Activated T-helper 1 cell treated with anti-CD3 and anti-CD28 coated beads, Interleukin-12 subunit alpha, Interleukin-12 subunit beta, Interleukin-2, Interleukin-4 antibody, amounts not matched to agents 30 ng/mL and 10 ng/mL and 1 ng/mL, durations not matched to agents 14 hours and 24 hours and 36 hours (primary cell): ENCODE measurements at regions of chr14 and their contacts with region 1.

Region 1: DNA sequence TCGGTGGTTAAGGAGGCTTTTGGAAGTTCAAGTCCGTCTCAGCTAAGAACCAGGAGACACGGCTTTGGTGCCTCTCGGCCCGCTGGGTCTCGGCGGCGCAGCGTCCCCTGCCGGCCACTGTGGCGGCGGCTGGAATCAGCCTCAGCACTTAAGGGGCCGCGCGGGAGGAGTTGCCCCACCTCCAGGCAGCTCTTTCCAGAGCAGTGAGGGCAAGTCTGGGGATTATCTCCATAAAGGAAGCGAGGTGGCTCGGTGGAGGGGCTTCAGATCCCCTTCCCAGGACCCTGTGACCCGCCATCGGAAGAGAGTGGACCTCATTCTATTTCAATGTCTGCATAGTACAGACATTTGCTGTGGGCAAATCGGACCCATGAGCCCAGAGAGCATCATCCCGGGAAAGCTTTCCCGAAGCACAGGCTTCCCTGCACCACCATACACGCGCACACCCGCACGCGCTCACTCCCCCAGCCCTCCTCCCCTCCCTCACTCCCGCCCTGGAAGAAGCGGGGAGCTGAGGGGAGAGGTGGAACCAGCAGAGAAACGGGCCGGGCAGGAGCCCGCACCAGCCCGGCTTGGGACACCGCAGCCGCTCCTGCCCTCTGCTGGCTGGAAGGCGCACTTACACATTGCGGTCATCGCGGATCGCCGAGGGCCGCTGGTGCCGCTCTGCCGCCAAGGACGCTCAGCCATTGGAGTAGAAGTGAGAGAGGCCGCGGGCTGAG is 15.9 kb downstream of the RNASE2 start:
- DNase-seq: peak; percentile 72
- H3K4me3 Mint-ChIP-seq: peak overlapping the region; percentile 93
- H3K27ac Mint-ChIP-seq: no peak overlapping the region
- H3K4me1 Mint-ChIP-seq: peaks cover 15% of the 10 kb centered on the region
- H3K27me3 Mint-ChIP-seq: peaks cover 35% of the 10 kb centered on the region

Region 2: GRCh38 chr14:20332788-20333493 is 638.2 kb before region 1 on chr14 and contains the start of gene CCNB1IP1:
- intact Hi-C with region 1: loop called (anchors 10 kb)
- DNase-seq: peak; percentile 62
- H3K4me3 Mint-ChIP-seq: peak within 1 kb of the TSS; percentile 98
- H3K27ac Mint-ChIP-seq: peak within 1 kb of the TSS; percentile 91
- H3K4me1 Mint-ChIP-seq: peaks cover 59% of the 10 kb centered on the region
- H3K27me3 Mint-ChIP-seq: peaks cover 5% of the 10 kb centered on the region
- total RNA-seq, gene CCNB1IP1: 61.2 and 72.5 TPM in 2 replicates

Region 3: DNA sequence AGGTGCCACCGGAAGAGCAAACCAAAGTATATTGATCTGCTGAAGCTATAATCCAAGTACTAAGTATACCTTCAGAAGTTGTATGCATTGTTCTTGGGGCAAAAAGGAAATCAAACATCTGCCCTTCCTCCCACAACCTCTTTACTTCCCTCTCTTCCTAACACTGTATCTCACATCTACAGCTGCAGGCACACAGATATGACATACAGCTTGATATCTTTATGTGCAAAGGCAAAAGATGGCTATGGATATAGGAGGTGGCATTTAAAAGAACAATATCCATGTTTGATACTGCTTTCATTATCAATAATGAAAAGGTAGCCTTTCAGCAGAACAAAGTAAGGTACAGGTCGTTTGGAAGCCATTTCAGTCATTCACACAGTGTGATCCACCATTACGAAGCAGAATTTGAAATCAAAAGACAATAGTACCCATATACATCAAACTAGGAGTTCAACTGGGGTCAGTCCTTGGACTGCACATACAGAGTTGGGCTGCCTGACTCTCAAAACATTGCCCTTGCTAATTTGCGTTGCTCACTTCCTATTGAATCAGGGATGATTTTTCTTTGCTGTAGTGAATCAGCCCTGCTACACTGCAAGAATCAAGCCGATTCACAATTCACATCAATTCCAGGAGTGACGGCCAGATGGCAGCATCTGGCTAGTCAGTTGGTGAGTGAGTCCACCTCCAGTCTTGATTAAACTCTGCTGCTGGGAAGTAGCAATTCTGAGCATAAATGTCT is 273.7 kb before region 1 on chr14:
- intact Hi-C with region 1: loop called (anchors 1 kb)
- DNase-seq: peak; percentile 44
- H3K4me3 Mint-ChIP-seq: no peak overlapping the region
- H3K27ac Mint-ChIP-seq: no peak overlapping the region
- H3K4me1 Mint-ChIP-seq: no peaks in the 10 kb centered on the region
- H3K27me3 Mint-ChIP-seq: peaks cover 8% of the 10 kb centered on the region

Region 4: DNA sequence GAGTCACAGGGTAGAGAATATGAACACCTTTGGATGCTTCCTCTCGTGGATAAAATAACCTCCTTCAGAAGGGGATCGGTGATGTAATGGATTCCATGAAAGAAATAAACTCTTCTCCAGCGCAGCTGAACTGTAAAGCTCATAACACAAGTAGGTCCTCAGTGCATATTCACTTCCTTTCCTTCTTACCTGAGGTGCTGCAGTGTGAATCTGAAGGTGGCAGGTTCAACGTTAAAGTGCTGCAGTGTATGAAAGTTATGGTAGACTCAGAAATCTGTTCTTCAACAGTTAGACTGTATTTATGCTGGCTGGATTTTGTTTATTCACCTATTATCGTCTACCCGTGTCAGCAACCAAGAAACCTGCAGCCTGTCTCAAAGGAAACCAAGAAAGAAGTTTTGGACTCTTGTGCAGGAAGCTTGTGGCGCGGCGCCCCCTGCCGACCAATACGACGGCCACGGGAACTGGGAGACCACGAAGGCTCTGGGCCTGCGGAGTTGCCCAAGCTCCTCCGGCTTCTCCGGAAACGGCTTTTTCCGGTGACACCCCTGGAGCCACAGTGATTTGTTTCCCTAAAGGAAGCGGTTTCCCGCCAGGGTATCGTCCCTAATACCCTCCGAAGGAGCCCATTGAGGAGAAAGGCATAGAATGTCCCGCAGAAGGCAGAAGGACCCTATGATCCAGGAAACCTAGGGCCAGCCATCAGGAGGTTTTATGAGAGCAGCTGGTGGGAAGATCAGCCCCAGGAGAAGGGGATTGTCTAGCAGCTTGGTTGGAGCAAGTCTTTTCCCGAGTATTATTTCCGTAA is 97.6 kb before region 1 on chr14:
- intact Hi-C with region 1: loop called (anchors 5 kb)
- DNase-seq: peak; percentile 62
- H3K4me3 Mint-ChIP-seq: no peak overlapping the region
- H3K27ac Mint-ChIP-seq: no peak overlapping the region
- H3K4me1 Mint-ChIP-seq: peaks cover 11% of the 10 kb centered on the region
- H3K27me3 Mint-ChIP-seq: peaks cover 23% of the 10 kb centered on the region

Region 5: DNA sequence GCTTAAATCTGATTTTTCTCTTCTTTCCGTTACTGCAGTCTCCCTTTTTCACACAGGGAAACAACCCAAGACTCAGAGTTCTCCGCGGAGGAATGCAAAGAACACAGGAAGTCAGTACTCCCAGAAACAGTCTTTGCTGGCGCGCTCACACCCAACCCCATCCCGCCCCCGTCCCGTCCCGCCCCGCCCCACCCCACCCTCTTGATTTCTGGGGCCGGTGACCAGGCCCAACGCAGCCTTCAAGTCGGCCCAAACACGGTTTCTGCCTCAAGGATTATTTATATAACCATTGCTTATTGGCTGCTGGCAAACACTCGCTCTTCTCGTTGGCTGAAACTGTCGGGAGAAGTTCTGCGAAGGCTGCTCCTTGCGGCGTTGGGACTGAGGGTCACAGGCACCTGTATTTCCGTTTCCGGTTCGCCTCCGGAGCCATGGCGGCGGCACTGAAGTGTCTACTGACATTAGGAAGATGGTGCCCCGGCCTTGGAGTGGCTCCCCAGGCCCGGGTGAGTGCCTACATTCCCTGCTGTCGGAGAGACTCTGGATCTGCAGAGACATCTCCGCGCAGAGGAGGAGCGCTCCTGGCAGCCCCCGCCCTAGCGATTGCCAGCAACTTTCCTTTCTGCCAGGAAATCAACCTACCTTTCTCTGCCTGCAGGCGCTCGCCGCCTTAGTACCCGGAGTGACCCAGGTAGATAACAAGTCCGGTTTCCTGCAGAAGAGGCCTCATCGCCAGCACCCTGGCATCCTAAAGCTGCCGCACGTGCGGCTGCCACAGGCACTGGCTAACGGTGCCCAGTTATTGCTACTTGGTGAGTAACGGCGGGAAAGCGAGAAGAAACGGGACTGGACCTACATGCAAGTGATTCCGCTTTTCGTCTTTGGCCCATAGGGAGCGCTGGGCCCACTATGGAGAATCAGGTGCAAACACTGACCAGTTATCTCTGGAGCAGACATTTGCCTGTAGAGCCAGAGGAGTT is 18.7 kb after region 1 on chr14 and contains the start of gene METTL17:
- intact Hi-C with region 1: loop called (anchors 1 kb)
- DNase-seq: peak; percentile 83
- H3K4me3 Mint-ChIP-seq: peak within 1 kb of the TSS; percentile 96
- H3K27ac Mint-ChIP-seq: peak within 1 kb of the TSS; percentile 85
- H3K4me1 Mint-ChIP-seq: peaks cover 25% of the 10 kb centered on the region
- H3K27me3 Mint-ChIP-seq: no peaks in the 10 kb centered on the region
- total RNA-seq, gene METTL17: 96.1 and 100 TPM in 2 replicates

Region 6: DNA sequence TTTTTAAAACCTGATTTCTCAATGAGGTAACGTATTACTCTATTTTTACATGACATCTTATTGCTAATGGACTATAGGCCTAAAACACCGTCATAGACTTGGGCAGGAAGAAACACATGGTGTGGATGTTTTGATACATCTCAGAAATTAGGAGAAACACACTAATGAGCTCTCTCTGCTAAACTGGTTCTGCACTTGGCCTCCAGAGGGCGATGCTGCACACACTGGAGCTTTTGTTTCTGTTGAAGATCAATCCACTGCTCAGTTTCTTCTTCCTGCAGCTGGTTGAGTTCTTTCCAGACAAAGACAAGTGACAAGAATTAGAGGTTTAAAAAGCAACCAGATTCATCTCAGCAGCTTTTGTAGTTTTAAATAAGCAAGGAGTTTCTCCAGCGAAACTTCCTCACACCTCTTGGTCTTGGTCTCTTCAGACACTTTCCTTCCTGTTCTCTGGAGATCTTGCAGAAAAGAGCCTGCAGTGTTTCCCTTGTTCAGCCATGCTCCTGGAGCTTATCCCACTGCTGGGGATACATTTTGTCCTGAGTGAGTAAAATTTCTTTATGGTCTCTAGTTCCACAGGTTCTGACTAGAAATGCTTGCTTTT is 881.0 kb after region 1 on chr14:
- intact Hi-C with region 1: no loop called
- DNase-seq: peak; percentile 55
- H3K4me3 Mint-ChIP-seq: peak overlapping the region; percentile 75
- H3K27ac Mint-ChIP-seq: peak overlapping the region; percentile 73
- H3K4me1 Mint-ChIP-seq: peaks cover 13% of the 10 kb centered on the region
- H3K27me3 Mint-ChIP-seq: peaks cover 24% of the 10 kb centered on the region